GM18951 (cell line): ENCODE measurements at regions of chr15 and their contacts with region 1.

Region 1: DNA sequence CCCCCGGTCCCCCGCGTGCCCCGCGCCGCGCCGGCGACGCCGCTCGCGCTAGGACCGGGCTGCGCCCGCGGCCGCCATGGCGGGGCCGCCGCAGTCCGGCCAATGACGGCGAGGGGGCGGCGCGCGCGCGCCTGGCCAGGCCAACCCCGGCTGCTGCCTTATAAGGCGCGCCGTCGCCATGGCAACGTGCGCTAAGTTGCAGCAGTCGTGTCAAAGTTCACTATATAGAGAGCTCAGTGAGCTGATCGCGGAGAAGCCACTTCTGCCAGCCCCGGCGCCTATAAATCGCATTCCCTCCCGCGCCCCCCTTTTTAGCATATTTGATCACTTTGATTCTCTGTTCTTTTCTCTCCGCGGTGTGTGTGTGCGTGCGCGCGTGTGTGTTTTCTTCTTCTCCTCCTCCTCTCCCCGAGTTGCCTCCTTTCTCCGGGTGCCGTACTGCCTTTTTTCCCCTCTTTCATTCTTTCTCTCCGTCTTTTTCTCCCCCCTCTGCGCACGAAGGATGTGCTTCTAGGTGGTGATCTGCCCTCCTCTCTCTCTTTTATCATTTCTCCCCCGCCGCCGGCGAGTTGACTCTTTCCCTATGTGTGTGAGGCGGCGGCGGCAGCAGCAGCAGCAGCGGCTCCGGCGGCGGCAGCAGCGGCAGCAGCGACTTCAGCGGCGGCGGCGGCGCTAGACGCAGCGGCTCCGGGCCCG is at the start of gene NR2F2:
- POLR2A ChIP-seq: peak; percentile 41

Region 2: DNA sequence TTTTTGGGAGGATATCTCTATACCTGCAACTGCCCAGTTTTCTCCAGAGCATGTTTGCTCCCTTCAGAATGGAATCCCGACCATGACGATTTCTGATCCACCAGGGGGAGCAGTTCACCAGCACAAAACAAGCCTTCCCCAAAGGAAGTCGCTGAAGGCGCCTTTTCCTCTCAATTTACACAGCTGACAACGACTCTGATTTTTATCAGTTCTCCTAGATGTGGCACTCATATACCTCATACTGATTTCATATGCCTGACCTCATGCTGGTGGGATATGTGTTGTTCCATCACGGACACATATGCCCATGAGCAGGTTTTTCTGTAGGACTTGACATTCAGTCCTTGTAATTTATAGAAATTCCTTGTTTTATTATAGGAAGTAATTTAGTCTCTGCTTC is 1071.1 kb before region 1 on chr15:
- in situ Hi-C with region 1: loop called (anchors 25 kb)
- POLR2A ChIP-seq: no peak

Region 3: GRCh38 chr15:96047255-96047931 is 283.2 kb before region 1 on chr15:
- in situ Hi-C with region 1: loop called (anchors 25 kb)
- POLR2A ChIP-seq: no peak